Motor neuron (in vitro differentiated cells): ENCODE measurements at regions of chr1 and their contacts with region 1.

Region 1: GRCh38 chr1:185317034-185317885 is at the start of gene IVNS1ABP:
- ATAC-seq: peak; percentile 73 to 83 (median 79)
- H3K4me3 ChIP-seq: peak within 1 kb of the TSS; percentile 66 to 95 (median 89)
- H3K27ac ChIP-seq: peak within 1 kb of the TSS; percentile 94 to 96
- H3K4me1 ChIP-seq: peaks cover 16 to 35% of the 10 kb centered on the region in 2 donors
- total RNA-seq, gene IVNS1ABP: 43.6 to 183 (median 108) TPM

Region 2: GRCh38 chr1:185466743-185467521 is 149.7 kb after region 1 on chr1:
- in situ Hi-C with region 1: no loop called
- ATAC-seq: no peak
- H3K4me3 ChIP-seq: no peak overlapping the region
- H3K27ac ChIP-seq: no peak overlapping the region
- H3K4me1 ChIP-seq: no peaks in the 10 kb centered on the region

Region 3: GRCh38 chr1:185483664-185484450 is 166.6 kb after region 1 on chr1:
- in situ Hi-C with region 1: loop called in 1 of 9 experiments (anchors 25 kb)
- ATAC-seq: peak; percentile 64 to 84 (median 80)
- H3K4me3 ChIP-seq: no peak overlapping the region
- H3K27ac ChIP-seq: peak overlapping the region in 1 of 2 donors; percentile 9
- H3K4me1 ChIP-seq: peaks cover 24 to 36% of the 10 kb centered on the region in 2 donors

Region 4: DNA sequence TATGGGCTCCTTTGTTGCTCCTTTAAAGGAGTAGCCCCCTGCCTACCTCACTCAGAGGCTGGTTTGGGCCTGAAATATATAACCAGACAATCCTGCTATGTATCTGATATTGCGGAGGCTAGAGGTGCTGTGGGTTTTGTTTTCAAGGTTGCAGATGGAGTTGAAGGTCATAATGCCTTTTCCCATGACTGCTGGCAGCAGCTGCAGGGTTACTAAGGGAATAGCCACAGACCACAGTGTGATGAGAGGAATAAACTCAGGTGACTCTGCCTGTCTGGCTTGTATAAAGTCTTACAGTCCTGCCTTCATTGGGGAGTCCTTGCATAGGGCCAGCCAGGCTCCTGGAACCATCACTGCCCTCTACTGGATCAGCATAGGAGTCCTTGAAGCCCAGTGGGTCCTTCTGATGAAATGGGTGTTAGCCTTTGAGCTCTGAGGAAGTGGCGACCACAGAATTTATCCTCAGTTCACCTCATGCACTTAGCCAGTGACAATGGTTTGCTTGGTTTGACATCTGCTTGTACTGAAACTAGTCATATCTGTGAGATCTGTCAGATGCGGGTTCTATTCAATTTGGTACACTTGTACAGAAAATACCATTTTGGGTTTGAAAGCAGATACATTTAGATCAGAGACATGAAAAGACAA is 242.5 kb after region 1 on chr1:
- in situ Hi-C with region 1: loop called in 2 of 9 experiments (anchors 25 kb)
- ATAC-seq: peak in 7 of 8 experiments; percentile 21 to 90 (median 43)
- H3K4me3 ChIP-seq: no peak overlapping the region
- H3K27ac ChIP-seq: no peak overlapping the region
- H3K4me1 ChIP-seq: peaks cover 0 to 7% of the 10 kb centered on the region in 2 donors

Region 5: GRCh38 chr1:185670187-185670627 is 352.9 kb after region 1 on chr1:
- in situ Hi-C with region 1: loop called in 3 of 9 experiments (anchors 25 kb)
- ATAC-seq: peak; percentile 32 to 91 (median 56)
- H3K4me3 ChIP-seq: no peak overlapping the region
- H3K27ac ChIP-seq: no peak overlapping the region
- H3K4me1 ChIP-seq: no peaks in the 10 kb centered on the region